ENCODE measurements at regions of chr1 and their contacts with region 1.

Region 1: GRCh38 chr1:229440851-229441537 is 7.1 kb upstream of the ACTA1 start:
- DNase-seq: peak; percentile 17
- H3K4me3 Mint-ChIP-seq: peak overlapping the region; percentile 57
- H3K27ac Mint-ChIP-seq: peak overlapping the region; percentile 76
- H3K4me1 Mint-ChIP-seq: peaks cover 22% of the 10 kb centered on the region
- H3K27me3 Mint-ChIP-seq: peaks cover 36% of the 10 kb centered on the region

Region 2: DNA sequence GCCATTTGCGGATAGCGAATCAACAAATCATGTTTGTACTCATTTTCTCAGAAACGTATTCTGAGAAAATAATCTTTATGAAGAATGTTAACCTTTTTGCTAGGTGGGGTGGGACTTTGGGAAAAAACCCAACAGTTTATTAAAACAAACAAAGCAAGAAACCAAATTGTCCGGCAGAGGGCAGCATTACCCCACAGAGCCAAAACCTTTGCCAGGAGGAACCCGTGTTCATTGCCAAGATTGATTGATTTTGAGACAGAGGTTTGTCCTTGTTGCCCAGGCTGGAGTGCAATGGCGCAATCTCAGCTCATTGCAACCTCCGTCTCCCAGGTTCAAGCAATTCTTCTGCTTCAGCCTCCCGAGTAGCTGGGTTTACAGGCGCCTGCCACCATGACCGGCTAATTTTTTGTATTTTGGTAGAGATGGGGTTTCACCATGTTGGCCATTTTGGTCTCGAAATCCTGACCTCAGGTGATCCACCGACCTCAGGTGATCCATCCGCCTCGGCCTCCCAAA is 776.5 kb before region 1 on chr1:
- intact Hi-C with region 1: loop called (anchors 5 kb)
- DNase-seq: peak; percentile 55
- H3K4me3 Mint-ChIP-seq: no peak overlapping the region
- H3K27ac Mint-ChIP-seq: no peak overlapping the region
- H3K4me1 Mint-ChIP-seq: no peaks in the 10 kb centered on the region
- H3K27me3 Mint-ChIP-seq: peaks cover 15% of the 10 kb centered on the region

Region 3: DNA sequence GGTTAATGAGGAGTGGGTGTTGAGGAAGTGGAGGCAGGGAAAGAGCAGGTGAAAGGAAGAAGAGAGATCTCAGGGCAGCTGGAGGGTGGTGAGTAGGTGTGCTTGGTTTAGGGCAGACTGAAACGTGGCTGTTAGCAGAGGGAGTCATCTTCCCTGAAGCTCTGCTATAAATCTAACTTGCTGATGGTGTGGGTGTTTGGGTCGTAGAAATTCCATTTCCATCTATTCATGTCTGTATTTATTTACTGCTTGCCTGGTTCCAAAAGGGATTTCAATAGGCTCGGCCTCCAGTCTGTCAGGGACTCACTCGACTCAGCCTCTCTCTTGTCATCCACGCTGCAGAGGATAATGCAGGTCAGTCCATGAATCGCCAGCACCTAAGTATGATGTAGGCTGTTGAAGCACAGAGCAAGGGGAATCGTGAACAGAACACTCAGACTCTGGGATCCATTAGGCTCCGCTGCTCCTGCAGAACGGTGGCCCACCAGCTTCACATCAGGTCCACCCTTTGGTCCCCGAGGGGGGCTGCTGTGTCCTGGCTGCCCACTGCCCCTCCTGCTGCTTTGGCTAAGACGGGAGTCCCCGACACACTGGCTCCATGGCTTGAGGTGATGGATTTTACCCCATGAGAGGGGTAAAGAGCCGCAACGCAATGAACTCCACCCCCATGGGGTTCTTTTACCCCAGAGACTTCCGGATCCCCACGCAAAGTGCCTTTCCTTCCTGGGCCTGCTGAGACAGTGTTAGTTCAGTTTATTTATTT is 549.5 kb before region 1 on chr1:
- intact Hi-C with region 1: no loop called
- DNase-seq: no peak
- H3K4me3 Mint-ChIP-seq: no peak overlapping the region
- H3K27ac Mint-ChIP-seq: no peak overlapping the region
- H3K4me1 Mint-ChIP-seq: peaks cover 24% of the 10 kb centered on the region
- H3K27me3 Mint-ChIP-seq: peaks cover 5% of the 10 kb centered on the region

Region 4: GRCh38 chr1:229258031-229258756 is 182.8 kb before region 1 on chr1:
- intact Hi-C with region 1: loop called (anchors 1 kb)
- DNase-seq: peak; percentile 23
- H3K4me3 Mint-ChIP-seq: no peak overlapping the region
- H3K27ac Mint-ChIP-seq: no peak overlapping the region
- H3K4me1 Mint-ChIP-seq: peaks cover 29% of the 10 kb centered on the region
- H3K27me3 Mint-ChIP-seq: peaks cover 11% of the 10 kb centered on the region

Region 5: DNA sequence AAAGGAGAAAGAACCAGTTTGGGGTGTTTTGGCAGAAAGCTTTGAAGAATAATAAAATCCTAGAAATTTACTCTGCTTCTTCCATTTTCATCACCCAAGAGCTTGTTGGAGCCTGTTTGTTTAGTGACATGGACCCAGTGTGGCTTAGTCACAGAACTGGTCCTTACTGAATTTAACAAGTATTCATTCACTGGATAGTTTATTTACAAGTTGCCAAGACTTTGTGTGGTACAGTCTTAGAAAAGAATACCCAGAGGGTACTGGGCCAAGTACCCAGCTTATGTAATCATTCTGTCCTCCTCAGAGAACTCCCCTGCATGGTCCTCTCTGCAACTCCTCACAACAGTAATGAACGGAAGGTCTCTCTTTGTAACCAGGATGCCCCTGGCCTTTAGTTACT is 153.7 kb before region 1 on chr1:
- intact Hi-C with region 1: loop called (anchors 1 kb)
- DNase-seq: no peak
- H3K4me3 Mint-ChIP-seq: no peak overlapping the region
- H3K27ac Mint-ChIP-seq: no peak overlapping the region
- H3K4me1 Mint-ChIP-seq: peaks cover 36% of the 10 kb centered on the region
- H3K27me3 Mint-ChIP-seq: no peaks in the 10 kb centered on the region

Region 6: DNA sequence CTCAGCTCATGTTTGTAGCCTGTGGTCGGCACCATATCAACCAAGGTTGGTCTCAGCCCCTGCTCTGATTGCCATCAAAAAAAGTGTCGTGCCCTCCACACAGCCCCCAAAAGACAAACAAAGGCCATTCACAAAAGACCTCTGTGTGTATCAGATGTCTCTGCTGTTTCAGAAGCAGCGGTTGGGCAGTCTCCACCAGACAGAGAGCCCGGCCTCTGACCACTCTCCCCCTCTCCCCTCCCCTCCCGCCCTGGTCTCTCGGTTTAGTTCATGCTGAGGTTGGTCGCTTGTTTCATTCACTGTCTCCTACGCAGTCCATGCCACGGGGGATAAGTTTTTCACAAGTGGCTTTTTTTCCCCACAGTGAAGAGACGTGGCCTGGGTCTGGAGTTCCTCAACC is 34.2 kb before region 1 on chr1:
- intact Hi-C with region 1: no loop called
- DNase-seq: no peak
- H3K4me3 Mint-ChIP-seq: no peak overlapping the region
- H3K27ac Mint-ChIP-seq: no peak overlapping the region
- H3K4me1 Mint-ChIP-seq: peaks cover 14% of the 10 kb centered on the region
- H3K27me3 Mint-ChIP-seq: peaks cover 72% of the 10 kb centered on the region

Region 7: GRCh38 chr1:229430761-229431283 is 10.2 kb before region 1 on chr1:
- intact Hi-C with region 1: loop called (anchors 1 kb)
- DNase-seq: no peak
- H3K4me3 Mint-ChIP-seq: peak overlapping the region; percentile 64
- H3K27ac Mint-ChIP-seq: peak overlapping the region; percentile 75
- H3K4me1 Mint-ChIP-seq: peaks cover 8% of the 10 kb centered on the region
- H3K27me3 Mint-ChIP-seq: peaks cover 79% of the 10 kb centered on the region

Region 8: GRCh38 chr1:229537894-229538293 is 96.9 kb after region 1 on chr1:
- intact Hi-C with region 1: loop called (anchors 1 kb)
- DNase-seq: no peak
- H3K4me3 Mint-ChIP-seq: no peak overlapping the region
- H3K27ac Mint-ChIP-seq: no peak overlapping the region
- H3K4me1 Mint-ChIP-seq: peaks cover 26% of the 10 kb centered on the region
- H3K27me3 Mint-ChIP-seq: peaks cover 2% of the 10 kb centered on the region

Region 9: GRCh38 chr1:230109895-230110667 is 669.1 kb after region 1 on chr1:
- intact Hi-C with region 1: loop called (anchors 2 kb)
- DNase-seq: peak; percentile 57
- H3K4me3 Mint-ChIP-seq: peak overlapping the region; percentile 53
- H3K27ac Mint-ChIP-seq: peak overlapping the region; percentile 89
- H3K4me1 Mint-ChIP-seq: peaks cover 82% of the 10 kb centered on the region
- H3K27me3 Mint-ChIP-seq: no peaks in the 10 kb centered on the region

Measured in activated T-helper 1 cell treated with anti-CD3 and anti-CD28 coated beads, Interleukin-12 subunit alpha, Interleukin-12 subunit beta, Interleukin-2, Interleukin-4 antibody, amounts not matched to agents 30 ng/mL and 10 ng/mL and 1 ng/mL, durations not matched to agents 14 hours and 24 hours and 36 hours (primary cell).